ENCODE measurements at regions of chr6 and their contacts with region 1.

Region 1: GRCh38 chr6:22784601-22785410 is 215.4 kb downstream of the HDGFL1 start:
- DNase-seq: peak; percentile 100

Region 2: DNA sequence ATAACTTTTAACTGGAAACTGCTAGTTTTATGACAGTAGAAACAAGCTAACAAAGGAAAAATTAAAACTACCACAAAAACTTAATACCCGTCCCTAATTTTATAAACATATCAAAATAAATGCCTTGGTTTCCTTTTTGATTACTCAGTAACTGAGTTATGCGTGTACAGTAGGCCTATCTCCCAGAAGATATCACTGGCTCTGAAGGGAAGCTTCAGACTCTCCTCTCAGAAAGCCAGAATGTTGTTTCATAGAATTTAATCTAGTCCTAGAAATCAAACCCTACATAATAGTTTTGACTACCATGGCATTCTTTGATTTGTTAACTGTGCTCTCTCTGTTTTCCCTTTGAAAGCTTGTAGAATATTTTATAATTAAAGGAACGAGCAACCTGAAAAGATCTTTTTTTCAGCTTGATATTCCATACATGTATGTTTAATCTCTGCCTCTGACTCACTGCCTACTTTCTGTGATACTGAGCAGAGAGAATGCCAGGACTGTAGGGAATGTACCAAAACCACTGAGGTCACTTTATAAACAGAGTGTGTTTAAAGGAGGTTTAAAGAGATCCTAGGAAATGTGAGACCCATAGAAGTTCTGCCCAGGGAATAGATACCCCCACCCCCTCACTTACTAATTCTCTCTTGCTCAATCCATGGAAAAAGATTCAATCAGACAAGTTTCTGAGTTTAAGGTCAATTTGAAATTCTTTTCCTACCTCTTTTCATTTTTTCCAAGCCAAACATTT is 96.1 kb after region 1 on chr6:
- in situ Hi-C with region 1: loop called (anchors 25 kb)
- DNase-seq: peak; percentile 61

Measured in SK-MEL-5 (cell line).